ENCODE measurements at regions of chr11 and their contacts with region 1.

Region 1: DNA sequence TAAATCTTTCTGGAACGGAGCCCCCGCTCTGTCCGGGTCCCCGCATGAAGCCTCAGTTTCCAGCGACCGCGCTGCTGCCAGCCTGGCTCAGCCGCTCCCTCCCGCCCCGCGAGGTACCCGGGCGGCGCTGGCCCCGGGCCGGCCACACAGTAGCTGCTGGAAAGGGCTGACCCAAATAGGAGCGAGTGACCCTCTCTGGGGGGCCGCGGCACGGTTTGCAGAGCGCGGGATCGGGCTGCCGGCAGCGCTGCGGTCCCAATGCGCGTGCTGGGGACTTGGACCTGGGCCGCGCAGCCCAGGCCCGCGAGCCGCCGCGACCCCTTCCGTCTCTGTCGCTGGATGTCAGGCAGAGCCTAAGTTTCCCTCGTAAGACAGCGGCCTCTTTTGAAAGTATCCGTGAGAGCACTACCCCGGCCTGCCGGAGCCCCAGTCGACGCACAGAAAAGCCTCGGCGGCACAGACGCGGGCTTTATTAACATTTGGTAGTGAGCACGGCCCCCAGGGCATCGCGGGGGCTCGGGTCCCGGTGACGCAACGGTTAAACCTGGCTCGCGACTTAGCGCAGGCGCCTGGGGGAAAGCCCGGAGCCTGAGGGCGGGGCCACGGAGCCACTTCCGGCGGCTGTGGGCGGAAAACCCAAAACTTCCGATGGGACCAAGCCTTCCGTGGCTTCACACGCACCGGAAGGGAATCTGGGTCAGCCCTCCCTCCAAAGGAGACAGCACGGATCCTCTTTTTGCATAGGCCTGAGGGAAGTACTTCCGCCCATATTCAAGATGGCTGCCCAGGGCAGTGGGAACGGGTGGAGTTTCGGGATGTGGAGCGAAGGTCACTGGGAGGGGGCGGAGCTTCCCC is 14.9 kb downstream of the BAD start:
- DNase-seq: peak; percentile 98 to 99 (median 99)
- H3K4me3 ChIP-seq: peak overlapping the region; percentile 76 to 94 (median 86)
- H3K27ac ChIP-seq: peak overlapping the region; percentile 88 to 96
- H3K4me1 ChIP-seq: peaks cover 4 to 51% (median 41%) of the 10 kb centered on the region in 4 experiments
- H3K27me3 ChIP-seq: no peaks in the 10 kb centered on the region

Region 2: GRCh38 chr11:63813035-63813562 is 456.5 kb before region 1 on chr11 and contains the start of gene SPINDOC:
- CTCF ChIA-PET with region 1: no interaction called
- POLR2A ChIA-PET with region 1: no interaction called
- DNase-seq: peak; percentile 34 to 57 (median 42)
- H3K4me3 ChIP-seq: peak within 1 kb of the TSS; percentile 69 to 86 (median 80)
- H3K27ac ChIP-seq: peak within 1 kb of the TSS in 1 of 2 experiments; percentile 43
- H3K4me1 ChIP-seq: peaks cover 4 to 20% (median 15%) of the 10 kb centered on the region in 4 experiments
- H3K27me3 ChIP-seq: no peaks in the 10 kb centered on the region

Region 3: DNA sequence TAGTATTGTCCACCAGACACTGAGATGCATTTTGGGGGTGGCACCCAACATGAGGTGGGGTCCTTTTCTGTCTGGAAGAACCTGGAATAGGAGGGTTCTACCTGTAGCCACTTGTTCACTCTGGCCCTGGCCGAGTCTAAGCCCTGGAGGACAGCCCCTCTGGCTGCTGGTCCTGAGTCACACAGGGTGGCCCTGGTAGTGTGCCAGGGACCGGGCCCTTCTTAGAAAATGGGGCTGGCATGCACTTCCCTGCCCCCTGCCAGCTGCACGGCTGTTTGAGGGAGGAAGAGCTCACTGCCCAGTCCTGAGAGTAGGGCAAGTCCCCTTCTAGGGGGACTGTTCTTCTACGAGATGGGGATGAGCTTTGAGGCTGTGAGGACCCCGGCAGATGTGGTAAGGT is 16.1 kb before region 1 on chr11:
- CTCF ChIA-PET with region 1: interaction called, 106 read pairs
- POLR2A ChIA-PET with region 1: interaction called, 10 read pairs
- DNase-seq: no peak
- H3K4me3 ChIP-seq: no peak overlapping the region
- H3K27ac ChIP-seq: no peak overlapping the region
- H3K4me1 ChIP-seq: peaks cover 0 to 39% (median 39%) of the 10 kb centered on the region in 4 experiments
- H3K27me3 ChIP-seq: no peaks in the 10 kb centered on the region

Region 4: GRCh38 chr11:64284048-64284961 is 14.7 kb after region 1 on chr11 and contains the start of gene BAD:
- CTCF ChIA-PET with region 1: interaction called, 42 read pairs
- POLR2A ChIA-PET with region 1: interaction called, 30 read pairs
- DNase-seq: peak; percentile 91 to 93 (median 93)
- H3K4me3 ChIP-seq: peak within 1 kb of the TSS; percentile 54 to 92 (median 81)
- H3K27ac ChIP-seq: peak within 1 kb of the TSS; percentile 98 to 99
- H3K4me1 ChIP-seq: peaks cover 0 to 21% (median 20%) of the 10 kb centered on the region in 4 experiments
- H3K27me3 ChIP-seq: peaks cover 0 to under 1% (median 0%) of the 10 kb centered on the region in 5 experiments

Region 5: GRCh38 chr11:64331557-64332371 is 62.2 kb after region 1 on chr11:
- CTCF ChIA-PET with region 1: interaction called, 15 read pairs
- POLR2A ChIA-PET with region 1: interaction called, 3 read pairs
- DNase-seq: peak; percentile 94 to 98 (median 97)
- H3K4me3 ChIP-seq: peak overlapping the region in 3 of 7 experiments; percentile 8 to 36 (median 15)
- H3K27ac ChIP-seq: peak overlapping the region in 1 of 2 experiments; percentile 27
- H3K4me1 ChIP-seq: peaks cover 0 to 40% (median 20%) of the 10 kb centered on the region in 4 experiments
- H3K27me3 ChIP-seq: no peaks in the 10 kb centered on the region

Region 6: DNA sequence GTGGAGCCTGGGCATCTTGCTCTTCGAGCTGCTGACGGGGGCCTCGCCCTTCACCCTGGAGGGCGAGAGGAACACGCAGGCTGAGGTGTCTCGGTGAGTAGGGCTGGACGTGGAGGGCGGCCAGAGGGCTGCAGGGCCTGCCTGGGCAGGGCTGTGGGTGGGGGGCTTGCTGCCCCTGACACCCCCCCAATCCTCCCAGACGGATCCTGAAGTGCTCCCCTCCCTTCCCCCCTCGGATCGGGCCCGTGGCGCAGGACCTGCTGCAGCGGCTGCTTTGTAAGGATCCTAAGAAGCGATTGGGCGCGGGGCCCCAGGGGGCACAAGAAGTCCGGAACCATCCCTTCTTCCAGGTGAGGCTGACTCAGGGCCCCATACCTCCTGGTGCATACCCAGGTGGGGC is 92.0 kb after region 1 on chr11:
- CTCF ChIA-PET with region 1: no interaction called
- POLR2A ChIA-PET with region 1: no interaction called
- DNase-seq: no peak
- H3K4me3 ChIP-seq: no peak overlapping the region
- H3K27ac ChIP-seq: no peak overlapping the region
- H3K4me1 ChIP-seq: peaks cover 2 to 75% (median 40%) of the 10 kb centered on the region in 4 experiments
- H3K27me3 ChIP-seq: no peaks in the 10 kb centered on the region

Region 7: GRCh38 chr11:64659417-64660144 is 390.0 kb after region 1 on chr11:
- CTCF ChIA-PET with region 1: no interaction called
- POLR2A ChIA-PET with region 1: no interaction called
- DNase-seq: peak in 2 of 3 donors; percentile 61 to 74
- H3K4me3 ChIP-seq: no peak overlapping the region
- H3K27ac ChIP-seq: no peak overlapping the region
- H3K4me1 ChIP-seq: peaks cover 0 to 72% (median 46%) of the 10 kb centered on the region in 4 experiments
- H3K27me3 ChIP-seq: no peaks in the 10 kb centered on the region